GM23248 (cell line): ENCODE measurements at regions of chr9 and their contacts with region 1.

Region 1: GRCh38 chr9:119365291-119366027 is 3.8 kb downstream of the BRINP1 start:
- DNase-seq: peak; percentile 74
- H3K4me3 ChIP-seq: no peak overlapping the region
- H3K27ac ChIP-seq: no peak overlapping the region
- H3K4me1 ChIP-seq: 0 out of 2 replicates have a peak, but pooled peaks cover 5% of the 10 kb centered on the region
- H3K27me3 ChIP-seq: 0 out of 2 replicates have a peak, but pooled peaks cover 3% of the 10 kb centered on the region

Region 2: DNA sequence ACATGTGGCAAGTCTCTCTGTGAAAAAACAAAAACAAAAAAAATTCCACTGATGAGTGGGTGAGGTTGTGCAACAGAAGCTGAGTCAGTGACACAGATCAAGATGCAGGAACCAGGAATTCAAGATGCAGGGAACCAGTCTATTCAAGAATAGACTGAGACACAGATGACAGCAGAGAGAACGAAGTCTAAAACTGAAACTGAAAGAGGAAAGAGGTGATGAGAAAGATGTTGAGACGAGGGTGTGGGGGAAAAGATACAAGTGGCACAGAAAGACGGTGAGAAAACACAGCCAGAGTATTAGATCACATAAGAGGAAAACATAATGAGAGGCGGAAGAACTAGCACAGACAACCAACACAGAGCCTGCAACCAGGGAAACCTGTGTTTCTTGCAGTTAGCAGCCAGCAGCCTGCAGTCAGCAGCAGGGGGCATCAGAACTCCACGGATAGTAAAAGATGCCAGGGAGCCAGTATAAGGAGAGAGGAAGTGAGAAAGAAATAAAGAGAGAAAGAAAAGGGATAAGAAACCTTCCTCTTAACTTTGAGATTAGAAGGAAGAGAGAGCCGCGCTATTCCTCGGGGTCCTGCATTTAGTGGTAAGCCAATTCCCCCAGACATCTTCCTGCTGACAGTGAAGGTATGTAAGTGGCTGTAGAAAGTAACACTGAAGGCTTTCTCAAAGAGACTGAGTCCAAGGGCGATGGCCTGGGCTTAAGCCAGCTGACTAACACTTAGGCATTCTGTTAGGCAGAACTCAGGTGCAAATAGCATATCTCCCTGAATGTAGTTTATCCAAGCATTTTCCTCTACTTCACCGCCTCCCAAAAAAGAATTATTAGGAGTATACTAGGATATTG is 1582.3 kb before region 1 on chr9:
- in situ Hi-C with region 1: loop called (anchors 10 kb)
- DNase-seq: peak; percentile 89
- H3K4me3 ChIP-seq: peak overlapping the region; percentile 78
- H3K27ac ChIP-seq: peak overlapping the region; percentile 68
- H3K4me1 ChIP-seq: peaks cover 12% of the 10 kb centered on the region
- H3K27me3 ChIP-seq: no peaks in the 10 kb centered on the region

Region 3: DNA sequence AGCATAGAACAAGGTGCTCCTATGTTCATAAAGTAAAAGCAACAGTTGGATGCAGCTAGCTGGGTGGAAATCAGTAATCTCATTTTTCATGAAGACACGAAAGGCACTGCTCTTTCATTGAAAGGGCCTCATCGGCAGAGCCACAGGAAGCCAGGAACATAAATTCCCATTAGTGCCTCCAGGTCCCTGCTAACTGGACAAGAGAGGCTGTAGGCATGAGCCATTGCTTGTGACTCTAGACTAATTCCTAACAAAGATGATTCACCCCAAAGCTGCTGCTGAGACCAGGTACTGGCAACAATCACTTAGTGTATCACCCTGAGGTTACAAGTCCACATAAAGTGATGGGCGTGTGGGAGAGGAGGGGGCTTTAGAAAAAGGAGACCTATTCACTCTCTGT is 138.0 kb before region 1 on chr9:
- in situ Hi-C with region 1: no loop called
- DNase-seq: peak; percentile 22
- H3K4me3 ChIP-seq: no peak overlapping the region
- H3K27ac ChIP-seq: no peak overlapping the region
- H3K4me1 ChIP-seq: no peaks in the 10 kb centered on the region
- H3K27me3 ChIP-seq: no peaks in the 10 kb centered on the region

Region 4: GRCh38 chr9:119273984-119274665 is 91.3 kb before region 1 on chr9:
- in situ Hi-C with region 1: no loop called
- DNase-seq: peak; percentile 60
- H3K4me3 ChIP-seq: no peak overlapping the region
- H3K27ac ChIP-seq: no peak overlapping the region
- H3K4me1 ChIP-seq: peaks cover 21% of the 10 kb centered on the region
- H3K27me3 ChIP-seq: no peaks in the 10 kb centered on the region

Region 5: DNA sequence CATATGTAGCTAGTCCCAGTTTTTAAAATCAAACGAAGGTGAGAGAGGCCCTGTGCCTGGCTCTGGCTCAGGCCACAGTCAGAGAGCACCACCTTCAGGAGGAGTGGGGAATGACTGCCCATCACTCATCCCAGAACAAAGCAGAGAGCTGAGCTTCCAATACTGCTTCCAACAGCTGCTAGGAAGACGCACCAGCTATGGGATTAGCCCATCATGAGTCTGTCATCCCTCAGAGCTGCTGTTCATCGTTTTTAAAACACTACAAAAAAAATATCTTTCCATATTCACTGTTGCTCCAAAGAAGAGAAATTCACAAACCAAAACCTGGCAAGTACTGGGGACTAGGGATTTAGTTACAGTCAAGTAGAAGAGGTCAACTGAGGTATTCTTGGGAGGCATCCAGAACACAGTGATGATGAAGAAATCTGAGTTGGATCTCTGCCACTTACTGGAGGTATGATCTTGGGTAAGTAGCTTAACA is 1112.1 kb after region 1 on chr9:
- in situ Hi-C with region 1: loop called (anchors 25 kb)
- DNase-seq: peak; percentile 86
- H3K4me3 ChIP-seq: peak overlapping the region; percentile 15; the same call in 1 of the 2 replicates
- H3K27ac ChIP-seq: peak overlapping the region; percentile 60
- H3K4me1 ChIP-seq: peaks cover 72% of the 10 kb centered on the region
- H3K27me3 ChIP-seq: no peaks in the 10 kb centered on the region